ENCODE measurements at regions of chr15 and their contacts with region 1.

Region 1: GRCh38 chr15:95932676-95933075 is 397.8 kb upstream of the NR2F2 start:
- H3K4me3 ChIP-seq: no peak overlapping the region
- H3K27ac ChIP-seq: no peak overlapping the region
- H3K4me1 ChIP-seq: no peaks in the 10 kb centered on the region
- CTCF ChIP-seq: no peak

Region 2: DNA sequence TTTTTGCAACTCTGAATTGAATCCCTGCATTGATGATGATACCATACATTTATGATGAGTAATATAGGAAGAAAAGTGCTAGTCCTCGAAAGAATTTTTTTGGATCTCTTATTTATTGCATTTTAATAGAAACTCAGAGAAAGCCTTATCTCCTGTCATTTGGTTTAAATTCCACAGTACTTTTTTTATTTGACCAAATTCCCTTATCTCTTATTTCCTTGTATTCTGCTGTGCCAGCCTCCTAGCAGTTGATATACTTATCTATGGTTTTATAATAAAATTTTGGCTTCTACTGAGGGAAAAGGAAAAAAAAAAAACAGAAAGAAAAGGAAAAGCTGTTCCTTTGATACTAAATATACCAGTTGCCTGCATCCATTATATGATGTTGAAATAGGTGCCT is 137.3 kb before region 1 on chr15:
- CTCF ChIA-PET with region 1: interaction called, 11 read pairs
- POLR2A ChIA-PET with region 1: no interaction called
- H3K4me3 ChIP-seq: no peak overlapping the region
- H3K27ac ChIP-seq: no peak overlapping the region
- H3K4me1 ChIP-seq: 0 out of 2 replicates have a peak, but pooled peaks cover 2% of the 10 kb centered on the region
- CTCF ChIP-seq: no peak

Region 3: DNA sequence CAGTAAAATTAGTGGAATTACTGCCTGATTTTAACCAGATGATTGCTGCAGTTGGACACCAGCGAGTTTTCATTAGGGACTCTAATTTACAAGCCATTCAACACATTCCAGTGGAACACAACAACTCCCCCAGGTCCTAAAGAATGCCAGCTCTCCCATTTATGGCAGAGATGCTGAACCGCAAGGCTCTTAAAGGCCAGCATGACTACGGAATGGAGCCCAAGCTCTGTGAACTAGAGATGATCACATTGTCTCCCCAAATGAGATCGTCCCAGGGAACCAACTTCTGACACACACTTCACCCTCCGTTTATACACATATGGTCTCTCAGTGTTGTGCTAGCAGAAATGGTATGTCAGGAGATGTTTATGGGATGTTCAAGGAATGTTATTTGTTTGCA is 48.4 kb before region 1 on chr15:
- CTCF ChIA-PET with region 1: no interaction called
- POLR2A ChIA-PET with region 1: no interaction called
- H3K4me3 ChIP-seq: no peak overlapping the region
- H3K27ac ChIP-seq: no peak overlapping the region
- H3K4me1 ChIP-seq: 0 out of 2 replicates have a peak, but pooled peaks cover 4% of the 10 kb centered on the region
- CTCF ChIP-seq: no peak

Measured in HEK293 (cell line).